ENCODE measurements at regions of chr1 and their contacts with region 1.

Region 1: DNA sequence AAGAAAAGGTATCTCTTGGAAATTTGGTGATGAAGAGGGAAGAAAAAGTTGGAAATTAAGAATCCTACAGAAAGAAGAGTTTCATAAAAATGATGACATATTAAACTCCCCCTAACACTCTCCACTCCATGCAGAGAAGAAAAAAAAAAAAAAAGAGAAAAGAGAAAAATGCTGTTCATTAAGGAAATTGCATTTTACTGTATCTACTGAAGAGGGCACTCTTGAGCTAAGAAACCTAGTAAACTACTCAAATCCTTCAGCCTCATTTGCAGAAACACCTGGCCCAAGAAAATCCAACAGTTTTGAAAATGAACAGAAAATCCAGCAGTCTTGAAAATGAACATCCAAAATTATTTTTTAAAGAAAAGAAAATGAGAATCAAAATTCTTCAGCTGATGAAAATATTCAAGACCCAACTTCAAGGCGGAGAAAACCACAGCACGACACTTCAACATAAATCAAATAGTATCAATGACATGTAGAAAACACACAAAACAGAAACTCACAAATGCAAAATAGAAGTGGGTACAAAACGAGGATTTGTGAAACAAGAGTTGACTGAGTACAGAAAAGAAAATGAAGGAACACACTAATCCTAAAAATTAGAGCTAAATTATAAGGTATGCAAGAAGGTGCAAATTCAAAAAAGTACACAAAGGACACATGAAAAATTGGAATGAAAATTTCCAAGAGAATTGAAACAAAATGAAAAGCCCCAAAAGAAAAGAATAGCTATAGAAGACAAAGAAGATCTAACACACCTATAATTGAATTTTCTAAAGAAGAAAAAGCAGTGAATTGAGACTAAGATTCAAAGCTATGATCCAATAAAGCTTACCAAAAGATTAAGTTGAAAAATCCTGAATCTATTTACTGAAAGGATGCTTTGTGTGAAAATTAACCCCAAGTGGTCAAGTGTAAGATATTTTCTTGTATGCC is 73.2 kb upstream of the DNAJC6 start:
- DNase-seq: no peak
- H3K4me3 ChIP-seq: no peak overlapping the region
- H3K27ac ChIP-seq: no peak overlapping the region
- H3K4me1 ChIP-seq: no peaks in the 10 kb centered on the region
- H3K27me3 ChIP-seq: no peaks in the 10 kb centered on the region
- CTCF ChIP-seq: peak in 2 of 3 experiments; percentile 55 to 65; a peak in 3 of 4 replicates
- EP300 ChIP-seq: no peak
- POLR2A ChIP-seq: no peak
- RAD21 ChIP-seq: peak; percentile 87 to 88

Region 2: DNA sequence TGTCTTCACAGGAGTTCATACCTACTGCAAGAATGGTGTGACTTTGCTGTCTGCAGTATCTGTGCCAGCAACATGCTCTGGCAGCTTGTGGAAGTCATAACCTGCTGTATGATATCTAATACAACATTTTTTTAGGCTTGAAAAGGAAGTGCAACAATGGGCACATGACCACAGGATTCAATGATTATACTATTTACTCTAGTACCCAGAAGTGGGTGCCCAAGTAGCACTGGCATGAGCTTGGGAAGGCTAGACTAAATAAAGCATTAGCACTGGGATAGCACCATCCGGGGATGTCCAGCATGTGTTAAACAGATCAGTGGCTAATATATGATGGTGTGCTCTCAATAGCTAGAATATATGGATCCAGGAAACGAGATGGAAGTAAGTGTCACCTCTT is 458.0 kb after region 1 on chr1:
- CTCF ChIA-PET with region 1: interaction called, 13 read pairs
- POLR2A ChIA-PET with region 1: no interaction called
- DNase-seq: no peak
- H3K4me3 ChIP-seq: no peak overlapping the region
- H3K27ac ChIP-seq: no peak overlapping the region
- H3K4me1 ChIP-seq: no peaks in the 10 kb centered on the region
- H3K27me3 ChIP-seq: no peaks in the 10 kb centered on the region
- CTCF ChIP-seq: no peak
- EP300 ChIP-seq: no peak
- POLR2A ChIP-seq: no peak
- RAD21 ChIP-seq: no peak

Measured in H1 (cell line).